ENCODE measurements at regions of chr1 and their contacts with region 1.

Region 1: DNA sequence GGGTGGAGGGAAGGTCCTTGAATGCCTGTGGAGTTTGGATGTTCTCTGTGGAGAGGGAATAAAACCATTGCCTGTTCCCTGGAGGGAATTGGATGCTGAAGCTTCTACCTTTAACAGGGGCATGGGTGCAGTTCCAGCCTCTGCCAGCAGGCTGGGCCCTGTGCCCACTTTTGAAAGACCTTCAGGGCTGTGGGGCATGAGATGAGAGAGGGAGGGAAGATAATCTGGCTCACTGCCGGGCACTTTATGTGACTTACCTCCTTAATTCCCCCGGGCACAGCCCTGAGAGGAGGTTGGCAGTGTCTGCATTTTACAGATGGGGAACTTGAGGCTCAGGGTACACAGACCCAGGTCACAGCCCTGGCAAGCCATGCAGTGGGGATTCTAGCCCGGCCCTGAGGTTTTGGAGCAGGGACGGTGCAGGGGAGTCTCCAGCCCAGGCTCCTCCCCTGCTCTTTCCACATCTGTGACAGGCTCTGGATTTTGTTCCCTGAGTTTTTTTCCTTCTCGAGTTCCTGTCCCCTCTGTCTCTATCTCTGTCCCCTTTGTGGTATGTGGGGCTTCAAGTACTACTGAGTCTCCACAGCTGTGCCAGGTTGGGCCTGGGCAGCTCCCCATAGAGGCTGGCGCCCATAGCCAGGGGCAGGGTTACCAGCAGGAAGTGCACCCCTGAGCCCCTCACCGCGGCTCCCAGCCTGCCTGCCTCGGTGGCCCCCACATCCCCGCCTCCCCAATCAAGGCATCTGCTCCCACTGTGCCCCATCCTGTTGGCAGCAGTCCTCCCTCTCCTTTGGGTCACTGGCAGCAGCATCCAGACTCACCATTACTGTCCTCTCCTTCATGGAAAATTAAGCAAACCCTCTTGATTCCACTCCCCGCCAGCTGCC is 14.0 kb upstream of the THEMIS2 start:
- DNase-seq: peak; percentile 93
- ATAC-seq: peak; percentile 95
- H3K4me3 Mint-ChIP-seq: peak overlapping the region; percentile 51
- H3K27ac Mint-ChIP-seq: no peak overlapping the region
- H3K4me1 Mint-ChIP-seq: peaks cover 8% of the 10 kb centered on the region
- H3K27me3 Mint-ChIP-seq: no peaks in the 10 kb centered on the region
- CTCF ChIP-seq: peak; percentile 98

Region 2: DNA sequence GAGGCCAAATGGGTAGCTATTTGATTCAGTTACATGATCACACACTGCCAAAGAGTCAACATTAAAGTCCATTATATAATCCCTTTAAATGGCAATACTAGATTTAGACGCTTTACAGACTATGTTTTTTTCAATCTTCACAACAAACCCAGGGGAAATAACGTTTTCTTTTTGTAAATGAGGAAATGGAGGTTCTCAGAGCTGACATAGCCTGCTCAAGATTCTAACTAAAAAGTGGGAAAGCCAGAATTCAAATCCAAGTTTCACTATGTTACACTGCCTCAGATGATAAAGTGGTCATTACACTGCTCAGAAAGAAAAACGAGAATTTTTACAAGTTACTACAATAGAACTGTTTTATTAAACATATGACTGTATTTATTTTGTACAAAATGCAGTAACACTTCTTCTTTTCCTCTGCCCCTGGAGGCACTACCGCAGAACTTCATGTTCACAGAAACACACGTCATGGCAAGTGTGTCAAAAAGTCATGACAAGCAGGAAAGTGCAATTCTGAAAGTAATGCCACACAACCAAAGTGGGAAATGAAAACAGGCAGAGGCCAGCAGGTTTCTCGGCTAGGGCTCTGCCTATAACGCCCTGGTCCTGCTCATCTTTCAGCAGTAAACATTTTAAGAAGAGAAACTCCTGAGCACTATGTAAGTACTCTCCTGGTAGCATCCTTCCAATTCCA is 33.0 kb after region 1 on chr1:
- CTCF ChIA-PET with region 1: interaction called, 10 read pairs
- POLR2A ChIA-PET with region 1: no interaction called
- DNase-seq: no peak
- ATAC-seq: no peak
- H3K4me3 Mint-ChIP-seq: no peak overlapping the region
- H3K27ac Mint-ChIP-seq: peak overlapping the region; percentile 11; the same call in 1 of the 2 replicates
- H3K4me1 Mint-ChIP-seq: no peaks in the 10 kb centered on the region
- H3K27me3 Mint-ChIP-seq: no peaks in the 10 kb centered on the region
- CTCF ChIP-seq: no peak

Region 3: GRCh38 chr1:27940297-27940696 is 82.0 kb after region 1 on chr1:
- CTCF ChIA-PET with region 1: interaction called, 12 read pairs
- POLR2A ChIA-PET with region 1: no interaction called
- DNase-seq: peak; percentile 66
- ATAC-seq: peak; percentile 44
- H3K4me3 Mint-ChIP-seq: no peak overlapping the region
- H3K27ac Mint-ChIP-seq: peak overlapping the region; percentile 10; the same call in 1 of the 2 replicates
- H3K4me1 Mint-ChIP-seq: peaks cover 35% of the 10 kb centered on the region
- H3K27me3 Mint-ChIP-seq: no peaks in the 10 kb centered on the region; the same call in 1 of the 2 replicates
- CTCF ChIP-seq: peak; percentile 50; the same call in 1 of the 2 replicates

Region 4: GRCh38 chr1:27959400-27960217 is 101.3 kb after region 1 on chr1 and contains the start of gene XKR8:
- CTCF ChIA-PET with region 1: interaction called, 16 read pairs
- POLR2A ChIA-PET with region 1: no interaction called
- DNase-seq: peak; percentile 86
- ATAC-seq: peak; percentile 89
- H3K4me3 Mint-ChIP-seq: peak within 1 kb of the TSS; percentile 79
- H3K27ac Mint-ChIP-seq: peak within 1 kb of the TSS; percentile 98
- H3K4me1 Mint-ChIP-seq: peaks cover 24% of the 10 kb centered on the region
- H3K27me3 Mint-ChIP-seq: no peaks in the 10 kb centered on the region
- CTCF ChIP-seq: no peak
- total RNA-seq, gene XKR8: 15.0 to 16.4 TPM (median 15.5 TPM) in 3 replicates

Region 5: GRCh38 chr1:27973771-27974416 is 115.6 kb after region 1 on chr1:
- CTCF ChIA-PET with region 1: interaction called, 19 read pairs
- POLR2A ChIA-PET with region 1: no interaction called
- DNase-seq: no peak
- ATAC-seq: no peak
- H3K4me3 Mint-ChIP-seq: no peak overlapping the region
- H3K27ac Mint-ChIP-seq: no peak overlapping the region
- H3K4me1 Mint-ChIP-seq: no peaks in the 10 kb centered on the region
- H3K27me3 Mint-ChIP-seq: no peaks in the 10 kb centered on the region
- CTCF ChIP-seq: no peak

Region 6: DNA sequence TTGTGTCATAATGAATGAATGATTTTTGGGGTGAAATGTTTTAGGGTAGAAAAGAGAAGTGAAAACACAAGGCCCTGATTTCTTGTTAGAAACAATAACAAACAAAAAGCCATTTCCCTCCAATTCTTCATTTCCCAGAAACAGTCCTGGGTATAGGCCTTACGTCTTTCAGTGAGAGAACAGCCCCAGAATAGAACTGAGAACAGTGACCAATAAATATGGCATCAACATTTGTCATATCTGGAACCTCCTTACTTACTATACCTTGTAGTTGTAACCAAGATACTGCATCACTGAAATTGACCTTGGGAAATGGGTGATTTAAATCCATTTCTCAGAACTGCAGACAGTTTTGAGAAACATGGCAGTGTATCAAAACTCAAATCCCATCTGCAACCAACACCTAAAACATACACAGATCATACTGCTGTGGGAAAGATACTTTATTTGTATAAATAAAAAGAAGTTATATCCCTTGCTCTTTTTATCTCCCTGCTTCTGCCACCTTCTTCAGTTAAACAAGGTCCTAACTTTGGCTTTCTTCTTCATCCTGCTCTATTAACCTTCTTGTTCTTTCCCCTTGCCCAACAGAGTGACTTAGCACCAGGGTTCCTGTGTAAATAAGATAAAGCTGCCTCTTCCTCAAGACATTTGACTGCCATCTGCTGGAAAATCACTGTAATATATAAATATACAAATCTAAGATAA is 121.0 kb after region 1 on chr1:
- CTCF ChIA-PET with region 1: interaction called, 19 read pairs
- POLR2A ChIA-PET with region 1: no interaction called
- DNase-seq: no peak
- ATAC-seq: no peak
- H3K4me3 Mint-ChIP-seq: no peak overlapping the region
- H3K27ac Mint-ChIP-seq: no peak overlapping the region
- H3K4me1 Mint-ChIP-seq: no peaks in the 10 kb centered on the region
- H3K27me3 Mint-ChIP-seq: no peaks in the 10 kb centered on the region
- CTCF ChIP-seq: no peak

Region 7: GRCh38 chr1:28028873-28029654 is 170.7 kb after region 1 on chr1:
- CTCF ChIA-PET with region 1: no interaction called
- POLR2A ChIA-PET with region 1: no interaction called
- DNase-seq: no peak
- ATAC-seq: no peak
- H3K4me3 Mint-ChIP-seq: no peak overlapping the region
- H3K27ac Mint-ChIP-seq: no peak overlapping the region
- H3K4me1 Mint-ChIP-seq: no peaks in the 10 kb centered on the region
- H3K27me3 Mint-ChIP-seq: no peaks in the 10 kb centered on the region
- CTCF ChIP-seq: no peak

Region 8: GRCh38 chr1:28208818-28209441 is 350.6 kb after region 1 on chr1:
- CTCF ChIA-PET with region 1: interaction called, 19 read pairs
- POLR2A ChIA-PET with region 1: no interaction called
- DNase-seq: peak; percentile 61
- ATAC-seq: peak; percentile 72
- H3K4me3 Mint-ChIP-seq: no peak overlapping the region
- H3K27ac Mint-ChIP-seq: peak overlapping the region; percentile 54
- H3K4me1 Mint-ChIP-seq: peaks cover 6% of the 10 kb centered on the region
- H3K27me3 Mint-ChIP-seq: no peaks in the 10 kb centered on the region
- CTCF ChIP-seq: no peak; the same call in 1 of the 2 replicates